K562 (cell line): ENCODE measurements at regions of chr17 and their contacts with region 1.

Region 1: DNA sequence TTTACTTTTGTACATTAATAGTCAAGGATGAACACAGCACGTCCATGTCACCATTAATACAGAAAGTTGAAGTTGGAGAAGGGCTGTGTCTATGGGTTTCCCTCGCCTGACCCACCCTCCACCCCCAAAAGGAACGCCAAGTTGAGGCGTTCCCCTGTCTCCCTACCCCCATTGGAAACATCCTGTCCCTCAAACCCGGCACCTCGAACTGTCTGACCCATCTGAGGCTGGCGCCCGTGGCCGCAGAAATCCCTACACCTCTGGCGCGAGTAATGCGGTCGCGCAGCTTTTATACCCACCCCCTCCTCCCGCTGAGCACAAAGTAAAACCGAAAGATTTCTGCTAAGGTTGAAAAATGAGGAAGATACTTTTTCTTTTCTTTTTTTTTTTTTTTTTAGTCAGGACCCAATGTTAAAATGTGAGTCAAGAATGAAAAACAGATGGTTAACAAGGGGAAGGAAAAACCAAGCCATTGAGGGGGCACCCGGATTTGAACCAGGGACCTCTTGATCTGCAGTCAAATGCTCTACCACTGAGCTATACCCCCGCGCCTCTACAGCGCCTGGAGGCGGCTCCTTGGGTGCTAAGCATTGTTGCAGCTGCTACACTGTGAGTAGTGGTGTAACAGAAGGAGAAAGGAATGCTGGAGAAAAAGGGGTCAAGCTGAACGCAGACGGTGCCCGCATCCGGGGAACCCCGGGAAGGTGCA is 887 bp upstream of the LASP1 start:
- DNase-seq: peak; percentile 62 to 90 (median 67)
- ATAC-seq: peak; percentile 69
- H3K4me3 ChIP-seq: peak overlapping the region; percentile 97
- H3K27ac ChIP-seq: peak overlapping the region; percentile 88
- H3K4me1 ChIP-seq: peaks cover 19 to 42% of the 10 kb centered on the region in 2 experiments
- H3K27me3 ChIP-seq: no peaks in the 10 kb centered on the region
- CTCF ChIP-seq: peak; percentile 63 to 67 (median 64)
- EP300 ChIP-seq: 0 out of 2 replicates have a peak, but pooled peaks have one; percentile 45
- POLR2A ChIP-seq: no peak
- RAD21 ChIP-seq: no peak

Region 2: GRCh38 chr17:38752119-38752929 is 116.6 kb before region 1 on chr17 and contains the start of gene PSMB3:
- CTCF ChIA-PET with region 1: no interaction called
- POLR2A ChIA-PET with region 1: interaction called, 9 read pairs
- in situ Hi-C with region 1: no loop called
- intact Hi-C with region 1: loop called (anchors 2 kb)
- DNase-seq: peak; percentile 95 to 99 (median 97)
- ATAC-seq: peak; percentile 84
- H3K4me3 ChIP-seq: peak within 1 kb of the TSS; percentile 74
- H3K27ac ChIP-seq: peak within 1 kb of the TSS; percentile 87
- H3K4me1 ChIP-seq: peaks cover 7 to 42% of the 10 kb centered on the region in 2 experiments
- H3K27me3 ChIP-seq: no peaks in the 10 kb centered on the region
- CTCF ChIP-seq: no peak
- EP300 ChIP-seq: peak; percentile 25; the same call in 1 of the 2 replicates
- POLR2A ChIP-seq: peak; percentile 90
- RAD21 ChIP-seq: no peak
- polyA plus RNA-seq, gene PSMB3: 2,413 to 2,775 TPM

Region 3: DNA sequence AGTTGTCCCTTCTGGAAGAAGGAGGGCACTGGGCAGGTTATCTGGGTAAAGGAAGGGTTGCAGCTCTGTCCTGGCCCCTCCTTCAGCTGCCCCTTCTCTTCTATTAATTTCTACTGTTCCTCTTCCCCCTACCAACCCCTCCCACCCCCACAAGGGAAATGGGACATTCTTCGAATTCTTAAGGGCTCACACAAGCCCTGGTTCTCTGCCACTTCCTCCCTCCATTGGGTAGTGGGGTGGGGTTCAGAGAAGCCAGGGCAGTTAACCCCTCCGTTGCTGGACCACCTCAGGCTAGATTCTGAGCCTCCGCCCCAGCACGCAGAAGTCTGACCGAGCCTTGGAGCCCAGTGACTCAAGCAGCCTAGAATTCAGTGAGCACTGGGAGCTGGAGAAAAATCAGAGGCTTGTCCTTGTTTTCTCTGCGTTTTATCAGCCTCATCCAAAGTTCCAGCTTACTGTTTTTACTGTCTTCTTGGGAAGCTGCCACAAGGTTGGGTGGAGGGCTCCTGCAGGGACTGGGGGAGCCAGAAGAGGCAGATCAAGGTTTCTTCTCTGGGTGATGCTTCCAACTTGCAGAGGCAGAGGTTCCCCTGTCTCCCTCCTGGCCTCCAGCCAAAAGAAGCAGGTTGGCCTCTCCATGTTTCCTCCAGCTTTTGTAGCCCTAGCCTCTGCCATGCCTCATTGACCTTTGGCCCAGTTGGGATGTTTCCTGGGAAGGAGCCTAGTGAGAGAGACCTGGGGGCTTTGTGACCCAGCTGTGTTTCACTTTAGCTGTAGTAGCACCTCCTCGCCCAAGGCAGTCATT is 11.1 kb after region 1 on chr17:
- CTCF ChIA-PET with region 1: no interaction called
- POLR2A ChIA-PET with region 1: interaction called, 24 read pairs
- in situ Hi-C with region 1: no loop called
- intact Hi-C with region 1: no loop called
- DNase-seq: peak in 1 of 4 experiments; percentile 14
- ATAC-seq: no peak
- H3K4me3 ChIP-seq: no peak overlapping the region
- H3K27ac ChIP-seq: no peak overlapping the region
- H3K4me1 ChIP-seq: peaks cover 9 to 15% of the 10 kb centered on the region in 2 experiments; a peak in 4 of 5 replicates
- H3K27me3 ChIP-seq: no peaks in the 10 kb centered on the region
- CTCF ChIP-seq: no peak
- EP300 ChIP-seq: no peak
- POLR2A ChIP-seq: no peak
- RAD21 ChIP-seq: no peak

Region 4: DNA sequence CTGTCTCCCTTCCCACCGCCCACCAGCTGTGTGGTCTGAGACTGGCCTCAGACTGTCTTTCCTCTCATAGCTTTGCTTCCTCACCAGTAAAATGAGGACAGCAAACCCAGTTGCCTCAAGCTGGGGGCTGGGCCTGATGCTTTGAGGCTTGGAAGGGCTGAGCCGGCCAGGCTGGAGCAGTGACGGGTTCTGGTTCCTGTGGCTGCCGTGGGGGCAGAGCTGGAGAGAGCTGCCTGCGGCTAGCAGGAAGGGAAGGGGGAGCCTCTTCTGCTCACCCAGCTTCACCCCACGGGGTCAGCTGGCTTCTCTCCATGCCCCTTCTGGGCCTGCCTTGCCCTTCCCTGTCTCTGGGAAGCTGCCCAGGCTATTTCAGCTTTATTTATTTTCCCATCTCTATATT is 24.6 kb after region 1 on chr17:
- CTCF ChIA-PET with region 1: interaction called, 3 read pairs
- POLR2A ChIA-PET with region 1: interaction called, 17 read pairs
- in situ Hi-C with region 1: no loop called
- intact Hi-C with region 1: no loop called
- DNase-seq: peak in 1 of 4 experiments; percentile 43
- ATAC-seq: peak; percentile 41
- H3K4me3 ChIP-seq: no peak overlapping the region
- H3K27ac ChIP-seq: peak overlapping the region; percentile 16; the same call in 1 of the 3 replicates
- H3K4me1 ChIP-seq: peaks cover 36 to 44% of the 10 kb centered on the region in 2 experiments
- H3K27me3 ChIP-seq: no peaks in the 10 kb centered on the region
- CTCF ChIP-seq: no peak
- EP300 ChIP-seq: no peak
- POLR2A ChIP-seq: no peak
- RAD21 ChIP-seq: no peak

Region 5: GRCh38 chr17:38925263-38925995 is 56.5 kb after region 1 on chr17 and contains the start of gene LASP1NB:
- CTCF ChIA-PET with region 1: no interaction called
- POLR2A ChIA-PET with region 1: interaction called, 7 read pairs
- in situ Hi-C with region 1: no loop called
- intact Hi-C with region 1: loop called (anchors 5 kb)
- DNase-seq: peak in 1 of 4 experiments; percentile 41
- ATAC-seq: no peak
- H3K4me3 ChIP-seq: no peak within 1 kb of the TSS
- H3K27ac ChIP-seq: no peak within 1 kb of the TSS
- H3K4me1 ChIP-seq: peaks cover 7 to 12% of the 10 kb centered on the region in 2 experiments; a peak in 3 of 5 replicates
- H3K27me3 ChIP-seq: no peaks in the 10 kb centered on the region
- CTCF ChIP-seq: no peak
- EP300 ChIP-seq: no peak
- POLR2A ChIP-seq: no peak
- RAD21 ChIP-seq: no peak

Region 6: GRCh38 chr17:39153599-39154051 is 284.7 kb after region 1 on chr17:
- CTCF ChIA-PET with region 1: interaction called, 3 read pairs
- POLR2A ChIA-PET with region 1: interaction called, 3 read pairs
- in situ Hi-C with region 1: no loop called
- intact Hi-C with region 1: loop called (anchors 5 kb)
- DNase-seq: peak; percentile 70 to 87 (median 73)
- ATAC-seq: peak; percentile 73
- H3K4me3 ChIP-seq: peak overlapping the region; percentile 90
- H3K27ac ChIP-seq: peak overlapping the region; percentile 73
- H3K4me1 ChIP-seq: peaks cover 8 to 27% of the 10 kb centered on the region in 2 experiments; a peak in 2 of 5 replicates
- H3K27me3 ChIP-seq: peaks cover 7 to 27% of the 10 kb centered on the region in 2 experiments; a peak in 4 of 5 replicates
- CTCF ChIP-seq: 0 out of 6 replicates have a peak, but pooled peaks of 1 of the 3 experiments have one; percentile 6
- EP300 ChIP-seq: peak; percentile 71
- POLR2A ChIP-seq: no peak
- RAD21 ChIP-seq: no peak